AG04450 (cell line): ENCODE measurements at regions of chr11 and their contacts with region 1.

Region 1: GRCh38 chr11:46529095-46529905 is 64.5 kb downstream of the AMBRA1 start:
- DNase-seq: no peak
- H3K4me3 ChIP-seq: no peak overlapping the region
- H3K27ac ChIP-seq: no peak overlapping the region
- H3K27me3 ChIP-seq: no peaks in the 10 kb centered on the region
- CTCF ChIP-seq: peak; percentile 96

Region 2: DNA sequence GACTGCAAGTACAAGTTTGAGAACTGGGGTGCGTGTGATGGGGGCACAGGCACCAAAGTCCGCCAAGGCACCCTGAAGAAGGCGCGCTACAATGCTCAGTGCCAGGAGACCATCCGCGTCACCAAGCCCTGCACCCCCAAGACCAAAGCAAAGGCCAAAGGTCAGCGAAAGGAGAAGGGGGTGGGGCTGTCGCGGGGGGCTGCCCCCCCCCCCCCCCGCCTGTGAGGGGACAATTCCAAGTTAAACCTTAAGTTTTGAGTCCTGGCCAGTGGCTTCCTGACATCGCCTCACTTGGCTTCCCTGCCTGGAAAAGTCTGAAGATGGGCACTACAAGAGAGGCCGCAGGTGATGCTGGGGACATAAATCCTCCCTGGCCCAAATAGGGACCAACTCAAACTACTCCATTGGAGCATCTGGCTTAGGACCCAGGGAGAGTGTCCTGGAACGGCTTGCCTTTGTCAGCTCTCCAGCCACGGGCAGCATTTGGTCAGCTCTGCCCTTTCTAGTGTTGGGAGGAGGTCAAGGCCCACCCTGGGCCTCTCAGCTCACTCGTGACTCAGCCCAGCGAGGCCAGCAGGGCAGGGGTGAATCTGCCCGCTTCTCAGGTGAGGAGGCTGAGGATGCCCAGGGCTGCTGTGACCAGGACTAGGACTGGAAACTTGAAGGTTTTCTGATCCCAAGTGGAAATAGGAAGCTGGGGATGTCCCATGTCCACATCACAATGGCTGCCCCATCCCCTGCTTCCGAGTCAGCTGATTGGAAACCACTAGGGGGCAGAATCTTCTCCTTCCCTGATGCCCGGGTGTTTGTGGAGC is 146.5 kb before region 1 on chr11:
- CTCF ChIA-PET with region 1: interaction called, 13 read pairs
- POLR2A ChIA-PET with region 1: no interaction called
- DNase-seq: no peak
- H3K4me3 ChIP-seq: peak overlapping the region; percentile 72
- H3K27ac ChIP-seq: no peak overlapping the region
- H3K27me3 ChIP-seq: no peaks in the 10 kb centered on the region
- CTCF ChIP-seq: peak; percentile 66

Region 3: GRCh38 chr11:46431211-46431610 is 98.1 kb before region 1 on chr11:
- CTCF ChIA-PET with region 1: interaction called, 14 read pairs
- POLR2A ChIA-PET with region 1: no interaction called
- DNase-seq: no peak
- H3K4me3 ChIP-seq: no peak overlapping the region
- H3K27ac ChIP-seq: peak overlapping the region; percentile 2
- H3K27me3 ChIP-seq: no peaks in the 10 kb centered on the region
- CTCF ChIP-seq: no peak

Region 4: GRCh38 chr11:46445920-46446771 is 83.2 kb before region 1 on chr11:
- CTCF ChIA-PET with region 1: interaction called, 10 read pairs
- POLR2A ChIA-PET with region 1: no interaction called
- DNase-seq: no peak
- H3K4me3 ChIP-seq: no peak overlapping the region
- H3K27ac ChIP-seq: no peak overlapping the region
- H3K27me3 ChIP-seq: no peaks in the 10 kb centered on the region
- CTCF ChIP-seq: peak; percentile 42

Region 5: DNA sequence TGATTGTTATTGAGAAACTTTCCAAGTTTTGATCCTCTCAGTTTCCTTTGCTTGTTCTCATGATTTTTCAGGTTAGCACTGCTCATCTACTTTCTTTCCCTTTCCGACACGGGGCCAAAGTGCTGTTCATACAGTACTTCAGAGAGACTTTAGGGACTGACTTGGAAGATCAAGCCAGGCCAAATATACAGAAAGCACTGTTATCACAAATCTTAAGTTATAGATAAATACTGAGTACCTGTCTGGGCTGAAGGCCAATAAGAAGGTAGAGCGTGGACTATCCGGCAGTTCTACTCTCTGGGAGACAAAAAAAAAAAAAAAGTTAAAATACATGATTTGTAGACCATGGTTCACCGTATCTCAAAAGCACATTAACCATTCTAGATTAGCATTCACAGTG is 18.3 kb after region 1 on chr11:
- CTCF ChIA-PET with region 1: interaction called, 10 read pairs
- POLR2A ChIA-PET with region 1: no interaction called
- DNase-seq: no peak
- H3K4me3 ChIP-seq: no peak overlapping the region
- H3K27ac ChIP-seq: no peak overlapping the region
- H3K27me3 ChIP-seq: no peaks in the 10 kb centered on the region
- CTCF ChIP-seq: no peak